Ascending aorta (tissue), 2 donors: ENCODE measurements at regions of chr3 and their contacts with region 1.

Region 1: DNA sequence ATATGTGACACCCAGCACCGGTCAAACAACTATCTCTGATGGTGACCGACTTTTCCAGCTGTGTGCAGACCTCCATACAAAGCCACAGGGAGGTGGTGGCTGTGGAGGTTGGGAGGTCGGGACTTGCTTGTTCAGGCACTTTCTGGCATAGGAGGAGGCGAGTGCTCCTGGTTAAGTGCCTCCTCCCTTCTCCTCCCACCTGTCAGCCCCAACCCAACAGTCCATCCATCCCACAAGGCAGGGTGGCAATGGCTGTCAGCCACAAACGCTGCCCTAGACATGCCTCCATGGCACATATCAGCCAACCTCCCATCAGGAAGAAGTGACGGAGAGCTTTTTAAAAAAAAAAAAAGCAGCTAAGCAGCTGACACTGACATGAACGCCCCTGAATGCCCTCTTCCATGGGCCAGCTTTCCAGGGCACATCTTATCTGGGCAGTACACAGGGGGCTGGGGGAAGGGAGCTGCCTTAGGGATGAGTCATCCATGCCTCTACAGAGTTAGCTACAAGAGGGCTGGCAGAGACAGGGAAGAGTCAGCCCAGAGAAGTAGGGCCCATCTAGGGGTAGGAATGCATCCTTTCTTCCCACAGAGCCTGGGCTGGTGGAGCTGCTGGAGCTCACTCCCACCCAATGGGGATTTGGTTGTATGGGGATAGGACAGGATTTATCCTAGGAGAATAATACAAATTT is 41.2 kb downstream of the CCDC12 start:
- DNase-seq: peak; percentile 90 to 98
- H3K4me3 ChIP-seq: no peak overlapping the region
- H3K27ac ChIP-seq: peak overlapping the region; percentile 85 to 94
- H3K4me1 ChIP-seq: peaks cover 47 to 62% of the 10 kb centered on the region in 2 donors
- H3K27me3 ChIP-seq: no peaks in the 10 kb centered on the region
- CTCF ChIP-seq: peak; percentile 68 to 84 (median 69)

Region 2: DNA sequence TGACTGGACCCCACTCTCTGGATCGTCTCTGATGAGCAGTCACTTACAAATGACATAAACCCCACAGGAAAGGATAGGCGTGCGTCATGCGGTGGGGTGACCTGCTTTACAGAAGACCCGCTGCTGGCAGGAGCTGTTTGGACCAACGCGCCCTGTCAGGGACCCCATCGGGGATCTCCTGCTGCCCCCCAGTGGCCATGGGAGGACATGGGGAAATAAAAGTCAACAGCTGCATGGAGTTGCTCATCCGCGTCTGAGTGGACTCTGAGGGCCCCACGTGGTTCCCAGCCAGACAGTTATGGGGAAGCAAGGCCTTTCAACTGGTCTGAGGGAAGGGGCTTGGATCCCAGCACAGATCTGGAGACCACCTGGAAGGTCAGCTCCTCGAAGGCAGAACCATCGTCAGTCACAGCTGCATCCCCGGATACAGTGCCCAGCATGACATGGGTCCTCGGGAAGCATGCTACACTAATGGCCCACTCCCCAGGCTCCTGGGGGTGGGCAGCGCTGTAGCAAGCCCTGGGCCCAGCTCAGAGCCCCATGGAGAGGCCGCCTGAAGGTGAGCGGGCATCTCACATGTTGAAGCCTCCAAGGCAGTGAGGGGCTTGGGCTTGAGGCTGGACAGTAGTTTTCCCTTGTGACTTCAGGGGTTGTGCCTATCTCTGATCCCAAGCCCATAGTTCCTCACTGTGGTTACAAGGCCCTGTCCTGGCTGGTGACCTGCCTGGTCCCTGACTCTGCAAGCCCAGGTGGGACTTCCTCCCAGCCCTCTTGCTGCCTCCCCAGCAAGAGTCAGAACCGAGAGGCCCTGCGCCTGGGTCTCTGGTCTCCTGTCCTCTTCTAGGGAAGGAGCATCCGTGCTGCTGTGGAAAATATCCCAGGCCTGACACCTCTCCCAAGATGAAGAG is 25.5 kb before region 1 on chr3:
- intact Hi-C with region 1: loop called (anchors 2 kb)
- DNase-seq: peak; percentile 56 to 92
- H3K4me3 ChIP-seq: peak overlapping the region in 1 of 2 donors; percentile 19
- H3K27ac ChIP-seq: no peak overlapping the region
- H3K4me1 ChIP-seq: peaks cover 14 to 21% of the 10 kb centered on the region in 2 donors
- H3K27me3 ChIP-seq: no peaks in the 10 kb centered on the region
- CTCF ChIP-seq: peak; percentile 83 to 93 (median 88)

Region 3: GRCh38 chr3:46965151-46965550 is 29.8 kb after region 1 on chr3:
- intact Hi-C with region 1: no loop called
- DNase-seq: no peak
- H3K4me3 ChIP-seq: no peak overlapping the region
- H3K27ac ChIP-seq: no peak overlapping the region
- H3K4me1 ChIP-seq: peaks cover 4 to 13% of the 10 kb centered on the region in 2 donors
- H3K27me3 ChIP-seq: no peaks in the 10 kb centered on the region
- CTCF ChIP-seq: no peak

Region 4: GRCh38 chr3:46976326-46977190 is 41.2 kb after region 1 on chr3 and contains the start of gene CCDC12:
- intact Hi-C with region 1: loop called (anchors 1 kb)
- DNase-seq: peak; percentile 94 to 98
- H3K4me3 ChIP-seq: peak within 1 kb of the TSS; percentile 60 to 83
- H3K27ac ChIP-seq: peak within 1 kb of the TSS; percentile 84 to 90
- H3K4me1 ChIP-seq: peaks cover 23 to 29% of the 10 kb centered on the region in 2 donors
- H3K27me3 ChIP-seq: no peaks in the 10 kb centered on the region
- CTCF ChIP-seq: no peak
- total RNA-seq, gene CCDC12: 34.3 TPM

Region 5: GRCh38 chr3:47009225-47010110 is 74.2 kb after region 1 on chr3:
- intact Hi-C with region 1: loop called (anchors 1 kb)
- DNase-seq: peak; percentile 68 to 94
- H3K4me3 ChIP-seq: peak overlapping the region; percentile 78 to 79
- H3K27ac ChIP-seq: peak overlapping the region; percentile 80 to 91
- H3K4me1 ChIP-seq: peaks cover 3 to 7% of the 10 kb centered on the region in 2 donors
- H3K27me3 ChIP-seq: no peaks in the 10 kb centered on the region
- CTCF ChIP-seq: no peak

Region 6: DNA sequence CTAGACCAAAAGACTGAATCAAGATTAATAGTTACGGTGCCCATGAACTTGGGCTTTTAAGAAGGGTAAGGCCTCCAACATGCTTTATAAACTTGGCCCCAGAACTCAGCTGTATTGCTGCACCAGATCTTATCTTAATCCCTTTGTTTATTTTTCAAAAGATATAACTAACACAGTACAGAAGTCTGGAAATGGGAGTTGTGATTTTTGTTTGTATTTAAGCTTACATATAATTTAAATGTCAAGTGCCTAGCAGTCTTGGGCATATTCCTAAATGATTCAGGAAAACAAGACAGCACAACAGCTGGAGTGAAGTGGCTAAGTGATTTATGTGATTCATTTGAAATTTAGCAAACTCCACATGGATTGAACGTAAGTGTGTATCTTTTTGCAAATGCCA is 100.3 kb after region 1 on chr3:
- intact Hi-C with region 1: no loop called
- DNase-seq: no peak
- H3K4me3 ChIP-seq: no peak overlapping the region
- H3K27ac ChIP-seq: no peak overlapping the region
- H3K4me1 ChIP-seq: no peaks in the 10 kb centered on the region
- H3K27me3 ChIP-seq: no peaks in the 10 kb centered on the region
- CTCF ChIP-seq: no peak

Region 7: DNA sequence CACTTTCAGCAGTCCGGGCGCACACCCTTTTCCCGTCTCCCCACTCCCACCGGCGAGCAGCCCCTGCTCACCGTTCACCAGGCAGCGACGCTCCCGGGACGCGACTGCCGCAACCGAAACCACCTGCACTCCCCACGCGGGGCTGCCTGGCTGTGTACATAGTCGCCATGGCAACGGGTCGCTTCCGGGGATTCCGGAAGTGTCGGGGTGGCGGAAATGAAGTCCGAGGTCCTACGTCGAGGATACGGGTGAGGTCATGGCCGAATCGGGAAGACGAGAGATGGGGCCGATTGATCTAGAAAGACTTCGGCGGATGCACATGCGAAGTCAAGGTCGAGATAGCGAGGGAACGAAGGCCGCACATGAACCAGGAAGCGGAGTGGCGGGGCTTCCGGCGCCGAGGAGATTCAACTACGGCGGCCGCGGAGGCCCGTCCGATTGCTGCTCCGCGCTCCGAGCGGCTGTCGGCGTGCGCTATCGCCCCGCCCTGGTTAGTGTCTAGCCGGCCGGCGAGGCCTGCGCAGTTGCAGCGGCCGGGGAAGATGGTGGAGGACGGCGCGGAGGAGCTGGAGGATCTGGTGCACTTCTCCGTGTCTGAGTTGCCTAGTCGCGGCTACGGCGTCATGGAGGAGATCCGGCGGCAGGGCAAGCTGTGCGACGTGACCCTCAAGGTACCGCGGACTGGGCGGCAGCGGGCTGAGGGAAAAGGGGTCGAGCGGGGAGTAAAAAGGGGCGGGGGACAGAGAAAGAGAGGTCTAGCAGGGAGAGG is 347.3 kb after region 1 on chr3 and contains the starts of genes KIF9 and KLHL18:
- intact Hi-C with region 1: loop called (anchors 10 kb)
- DNase-seq: peak; percentile 82 to 97
- H3K4me3 ChIP-seq: peak within 1 kb of the TSS; percentile 74
- H3K27ac ChIP-seq: peak within 1 kb of the TSS; percentile 89 to 94
- H3K4me1 ChIP-seq: peaks cover 7 to 27% of the 10 kb centered on the region in 2 donors
- H3K27me3 ChIP-seq: no peaks in the 10 kb centered on the region
- CTCF ChIP-seq: no peak
- total RNA-seq, gene KIF9: not detected
- total RNA-seq, gene KLHL18: 1.8 TPM

Region 8: GRCh38 chr3:47315069-47315647 is 379.8 kb after region 1 on chr3:
- intact Hi-C with region 1: loop called (anchors 10 kb)
- DNase-seq: no peak
- H3K4me3 ChIP-seq: no peak overlapping the region
- H3K27ac ChIP-seq: no peak overlapping the region
- H3K4me1 ChIP-seq: no peaks in the 10 kb centered on the region
- H3K27me3 ChIP-seq: no peaks in the 10 kb centered on the region
- CTCF ChIP-seq: no peak